ENCODE measurements at regions of chr15 and their contacts with region 1.

Region 1: GRCh38 chr15:82999905-83000671 is 11.4 kb downstream of the C15orf40 start:
- DNase-seq: peak; percentile 68
- ATAC-seq: peak; percentile 83
- H3K4me3 ChIP-seq: peak overlapping the region in 3 of 5 experiments; percentile 29 to 44 (median 40)
- H3K4me3 Mint-ChIP-seq: peak overlapping the region; percentile 88
- H3K27ac ChIP-seq: peak overlapping the region in 1 of 2 donors; percentile 62
- H3K27ac Mint-ChIP-seq: peak overlapping the region; percentile 91
- H3K4me1 ChIP-seq: peaks cover 6 to 8% of the 10 kb centered on the region in 2 donors
- H3K4me1 Mint-ChIP-seq: peaks cover 7% of the 10 kb centered on the region
- H3K27me3 ChIP-seq: no peaks in the 10 kb centered on the region
- H3K27me3 Mint-ChIP-seq: no peaks in the 10 kb centered on the region
- CTCF ChIP-seq: peak; percentile 72

Region 2: GRCh38 chr15:82849556-82850512 is 150.3 kb before region 1 on chr15:
- CTCF ChIA-PET with region 1: interaction called, 21 read pairs
- POLR2A ChIA-PET with region 1: no interaction called
- intact Hi-C with region 1: loop called (anchors 2 kb)
- DNase-seq: peak; percentile 72
- ATAC-seq: peak; percentile 22
- H3K4me3 ChIP-seq: no peak overlapping the region
- H3K4me3 Mint-ChIP-seq: peak overlapping the region; percentile 52
- H3K27ac ChIP-seq: no peak overlapping the region
- H3K27ac Mint-ChIP-seq: peak overlapping the region; percentile 66
- H3K4me1 ChIP-seq: peaks cover 6 to 23% of the 10 kb centered on the region in 2 donors
- H3K4me1 Mint-ChIP-seq: peaks cover 31% of the 10 kb centered on the region
- H3K27me3 ChIP-seq: no peaks in the 10 kb centered on the region
- H3K27me3 Mint-ChIP-seq: no peaks in the 10 kb centered on the region
- CTCF ChIP-seq: peak; percentile 73